ENCODE measurements at regions of chr3 and their contacts with region 1.

Region 1: GRCh38 chr3:66038726-66039589 is at the start of gene MAGI1:
- DNase-seq: peak; percentile 97
- H3K4me3 ChIP-seq: peak within 1 kb of the TSS; percentile 65 to 91 (median 91)
- H3K27ac ChIP-seq: peak within 1 kb of the TSS; percentile 84
- H3K4me1 ChIP-seq: peaks cover 24% of the 10 kb centered on the region
- H3K27me3 ChIP-seq: no peaks in the 10 kb centered on the region
- CTCF ChIP-seq: no peak
- POLR2A ChIP-seq: peak; percentile 21
- total RNA-seq, gene MAGI1: 47.7 and 47.9 TPM in 2 replicates

Region 2: GRCh38 chr3:65883613-65884012 is 155.3 kb before region 1 on chr3:
- CTCF ChIA-PET with region 1: no interaction called
- POLR2A ChIA-PET with region 1: no interaction called
- dilution Hi-C with region 1: no loop called
- intact Hi-C with region 1: loop called (anchors 5 kb)
- DNase-seq: peak; percentile 68
- H3K4me3 ChIP-seq: no peak overlapping the region
- H3K27ac ChIP-seq: no peak overlapping the region
- H3K4me1 ChIP-seq: peaks cover 15% of the 10 kb centered on the region
- H3K27me3 ChIP-seq: no peaks in the 10 kb centered on the region
- CTCF ChIP-seq: no peak
- POLR2A ChIP-seq: no peak

Region 3: GRCh38 chr3:65953301-65953812 is 85.6 kb before region 1 on chr3:
- CTCF ChIA-PET with region 1: interaction called, 3 read pairs
- POLR2A ChIA-PET with region 1: no interaction called
- dilution Hi-C with region 1: no loop called
- intact Hi-C with region 1: loop called (anchors 2 kb)
- DNase-seq: peak; percentile 52
- H3K4me3 ChIP-seq: no peak overlapping the region
- H3K27ac ChIP-seq: peak overlapping the region; percentile 70
- H3K4me1 ChIP-seq: peaks cover 83% of the 10 kb centered on the region
- H3K27me3 ChIP-seq: no peaks in the 10 kb centered on the region
- CTCF ChIP-seq: no peak
- POLR2A ChIP-seq: no peak

Region 4: DNA sequence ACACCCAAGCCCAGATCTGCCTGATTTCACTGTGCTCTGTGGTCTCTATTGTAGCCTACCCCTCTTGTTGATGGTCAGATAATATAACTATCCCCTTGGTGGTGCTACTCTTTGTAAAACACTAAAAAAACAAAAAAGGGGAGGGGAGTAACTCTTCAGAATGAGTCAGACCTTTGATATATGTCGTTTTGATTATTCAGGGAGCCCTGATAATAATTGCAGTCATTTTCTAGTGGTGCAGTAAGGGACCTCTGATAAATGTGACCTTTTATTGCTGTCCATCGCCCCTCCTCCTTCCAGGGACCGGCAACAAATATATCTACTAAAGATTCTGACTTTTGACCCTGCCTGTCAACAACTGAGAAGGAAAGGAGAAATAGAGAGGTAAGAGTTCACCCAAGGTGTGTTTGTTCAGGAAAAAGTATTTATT is 44.8 kb after region 1 on chr3:
- CTCF ChIA-PET with region 1: no interaction called
- POLR2A ChIA-PET with region 1: no interaction called
- dilution Hi-C with region 1: no loop called
- intact Hi-C with region 1: no loop called
- DNase-seq: no peak
- H3K4me3 ChIP-seq: no peak overlapping the region
- H3K27ac ChIP-seq: no peak overlapping the region
- H3K4me1 ChIP-seq: no peaks in the 10 kb centered on the region
- H3K27me3 ChIP-seq: no peaks in the 10 kb centered on the region
- CTCF ChIP-seq: no peak
- POLR2A ChIP-seq: no peak

Region 5: GRCh38 chr3:66107855-66108254 is 68.9 kb after region 1 on chr3:
- CTCF ChIA-PET with region 1: no interaction called
- POLR2A ChIA-PET with region 1: no interaction called
- dilution Hi-C with region 1: no loop called
- intact Hi-C with region 1: loop called (anchors 1 kb)
- DNase-seq: peak; percentile 57
- H3K4me3 ChIP-seq: no peak overlapping the region
- H3K27ac ChIP-seq: peak overlapping the region; percentile 71
- H3K4me1 ChIP-seq: peaks cover 19% of the 10 kb centered on the region
- H3K27me3 ChIP-seq: no peaks in the 10 kb centered on the region
- CTCF ChIP-seq: no peak
- POLR2A ChIP-seq: no peak

Region 6: DNA sequence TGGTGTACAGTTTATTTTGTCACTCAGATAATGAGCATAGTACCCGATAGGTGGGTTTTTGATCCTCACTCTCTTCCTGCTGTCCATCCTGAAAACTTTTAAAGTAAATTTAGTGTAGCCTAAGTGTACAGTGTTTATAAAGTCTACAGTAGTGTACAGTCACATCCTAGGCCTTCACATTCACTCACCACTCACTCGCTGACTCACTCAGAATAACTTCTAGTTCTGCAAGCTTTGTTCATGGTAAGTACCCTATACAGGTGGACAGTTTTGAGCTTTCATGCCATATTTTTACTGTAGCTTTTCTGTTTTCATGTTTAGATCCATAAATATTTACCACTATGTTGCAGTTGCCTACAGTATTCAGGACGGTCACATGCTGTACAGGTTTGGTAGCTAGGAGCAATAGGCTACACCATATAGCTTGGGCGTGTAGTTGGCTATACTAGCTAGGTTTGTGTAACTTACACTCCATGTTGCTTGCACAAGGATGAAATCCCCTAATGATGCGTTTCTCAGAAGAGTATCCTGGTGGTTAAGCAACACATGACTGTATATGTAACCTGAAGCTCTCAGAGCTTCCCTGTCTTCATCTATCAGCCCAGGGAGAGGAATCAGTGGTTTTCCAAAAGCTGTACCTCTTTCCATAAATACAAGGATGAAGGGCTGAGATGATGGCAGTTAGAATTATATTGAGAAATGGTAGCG is 94.2 kb after region 1 on chr3:
- CTCF ChIA-PET with region 1: interaction called, 24 read pairs
- POLR2A ChIA-PET with region 1: no interaction called
- dilution Hi-C with region 1: no loop called
- intact Hi-C with region 1: loop called (anchors 1 kb)
- DNase-seq: peak; percentile 79
- H3K4me3 ChIP-seq: no peak overlapping the region
- H3K27ac ChIP-seq: peak overlapping the region; percentile 68
- H3K4me1 ChIP-seq: peaks cover 24% of the 10 kb centered on the region
- H3K27me3 ChIP-seq: no peaks in the 10 kb centered on the region
- CTCF ChIP-seq: no peak
- POLR2A ChIP-seq: no peak

Region 7: GRCh38 chr3:66195347-66195783 is 156.4 kb after region 1 on chr3:
- CTCF ChIA-PET with region 1: interaction called, 4 read pairs
- POLR2A ChIA-PET with region 1: no interaction called
- dilution Hi-C with region 1: no loop called
- intact Hi-C with region 1: loop called (anchors 1 kb)
- DNase-seq: peak; percentile 59
- H3K4me3 ChIP-seq: peak overlapping the region in 1 of 3 experiments; percentile 9
- H3K27ac ChIP-seq: no peak overlapping the region
- H3K4me1 ChIP-seq: peaks cover 3% of the 10 kb centered on the region
- H3K27me3 ChIP-seq: peaks cover 1 to 8% of the 10 kb centered on the region in 2 experiments
- CTCF ChIP-seq: peak; percentile 10 to 20
- POLR2A ChIP-seq: no peak

Region 8: DNA sequence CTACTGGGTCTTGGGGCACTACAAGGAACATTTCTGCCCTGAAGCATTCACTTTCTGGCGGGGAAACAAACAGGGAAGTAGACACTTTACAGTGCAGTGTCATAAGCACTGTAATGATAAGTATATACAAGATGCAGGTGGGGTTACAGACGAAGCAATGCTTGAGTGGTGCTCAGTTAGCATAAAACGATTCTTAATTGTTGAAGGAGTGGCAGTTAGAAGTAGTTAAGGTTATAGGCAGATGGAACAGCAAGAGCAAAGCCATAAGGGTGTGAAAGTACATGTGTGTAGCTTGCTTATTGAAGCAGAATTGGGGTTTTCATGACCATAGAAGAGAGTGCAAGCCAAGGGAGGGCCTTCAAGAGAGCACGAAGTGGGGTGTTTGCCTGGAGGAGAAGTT is 228.1 kb after region 1 on chr3:
- CTCF ChIA-PET with region 1: no interaction called
- POLR2A ChIA-PET with region 1: no interaction called
- dilution Hi-C with region 1: no loop called
- intact Hi-C with region 1: no loop called
- DNase-seq: no peak
- H3K4me3 ChIP-seq: no peak overlapping the region
- H3K27ac ChIP-seq: no peak overlapping the region
- H3K4me1 ChIP-seq: no peaks in the 10 kb centered on the region
- H3K27me3 ChIP-seq: no peaks in the 10 kb centered on the region
- CTCF ChIP-seq: no peak
- POLR2A ChIP-seq: no peak

Region 9: GRCh38 chr3:66748175-66748876 is 709.4 kb after region 1 on chr3:
- CTCF ChIA-PET with region 1: no interaction called
- POLR2A ChIA-PET with region 1: no interaction called
- dilution Hi-C with region 1: no loop called
- intact Hi-C with region 1: no loop called
- DNase-seq: no peak
- H3K4me3 ChIP-seq: no peak overlapping the region
- H3K27ac ChIP-seq: no peak overlapping the region
- H3K4me1 ChIP-seq: no peaks in the 10 kb centered on the region
- H3K27me3 ChIP-seq: peaks cover 0 to 2% of the 10 kb centered on the region in 2 experiments
- CTCF ChIP-seq: no peak
- POLR2A ChIP-seq: no peak

Measured in endothelial cell of umbilical vein (primary cell).